ENCODE measurements at regions of chr17 and their contacts with region 1.

Region 1: DNA sequence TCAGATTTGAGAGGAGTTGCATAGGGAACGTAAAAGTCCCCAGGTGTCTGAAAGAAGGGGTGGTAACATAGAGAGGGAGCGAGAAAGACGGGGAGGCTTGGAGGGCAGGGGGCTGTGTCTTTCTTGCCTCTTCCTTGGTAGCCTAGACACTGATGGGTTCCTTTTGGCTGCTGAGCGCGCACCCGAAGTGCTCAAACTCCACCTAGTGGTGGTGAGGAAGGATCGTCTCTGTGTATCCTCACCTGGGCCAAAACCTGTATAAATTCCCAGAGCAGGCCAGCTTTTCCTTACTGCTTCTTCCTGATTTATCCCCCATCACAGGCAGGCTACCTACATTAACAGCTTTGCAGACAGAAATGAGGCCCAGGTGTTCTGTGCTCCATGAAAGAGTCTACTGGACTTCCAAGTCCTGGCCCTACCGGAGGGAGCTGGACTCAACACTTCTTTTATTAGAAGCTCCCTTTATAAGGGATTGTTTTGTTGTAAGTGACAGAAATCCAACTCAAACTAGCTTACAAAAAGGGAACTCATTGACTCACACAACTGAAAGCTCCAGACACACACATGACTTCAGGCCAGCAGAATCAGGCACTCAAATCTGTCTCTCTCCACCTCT is 5.5 kb upstream of the SLC25A35 start:
- DNase-seq: peak; percentile 64 to 83 (median 81)
- H3K4me3 ChIP-seq: no peak overlapping the region
- H3K27ac ChIP-seq: no peak overlapping the region
- H3K4me1 ChIP-seq: peaks cover 0 to 3% (median 2%) of the 10 kb centered on the region in 4 experiments
- H3K27me3 ChIP-seq: no peaks in the 10 kb centered on the region

Region 2: GRCh38 chr17:8209909-8210760 is 90.6 kb before region 1 on chr17 and contains the start of gene AURKB:
- CTCF ChIA-PET with region 1: no interaction called
- POLR2A ChIA-PET with region 1: no interaction called
- DNase-seq: peak; percentile 94 to 98 (median 96)
- H3K4me3 ChIP-seq: peak within 1 kb of the TSS; percentile 60 to 95 (median 86)
- H3K27ac ChIP-seq: peak within 1 kb of the TSS; percentile 64 to 84
- H3K4me1 ChIP-seq: peaks cover 4 to 33% (median 19%) of the 10 kb centered on the region in 4 experiments
- H3K27me3 ChIP-seq: no peaks in the 10 kb centered on the region

Region 3: GRCh38 chr17:8243827-8244226 is 56.9 kb before region 1 on chr17:
- CTCF ChIA-PET with region 1: interaction called, 10 read pairs
- POLR2A ChIA-PET with region 1: interaction called, 10 read pairs
- DNase-seq: peak in 2 of 3 donors; percentile 23 to 46
- H3K4me3 ChIP-seq: no peak overlapping the region
- H3K27ac ChIP-seq: no peak overlapping the region
- H3K4me1 ChIP-seq: peaks cover 0 to 12% (median 9%) of the 10 kb centered on the region in 4 experiments
- H3K27me3 ChIP-seq: no peaks in the 10 kb centered on the region

Region 4: GRCh38 chr17:8315764-8316217 is 15.1 kb after region 1 on chr17:
- CTCF ChIA-PET with region 1: interaction called, 15 read pairs
- POLR2A ChIA-PET with region 1: no interaction called
- DNase-seq: no peak
- H3K4me3 ChIP-seq: no peak overlapping the region
- H3K27ac ChIP-seq: no peak overlapping the region
- H3K4me1 ChIP-seq: no peaks in the 10 kb centered on the region
- H3K27me3 ChIP-seq: peaks cover 0 to 1% (median 0%) of the 10 kb centered on the region in 5 experiments

Measured in common myeloid progenitor, CD34-positive (primary cell).